Activated naive CD8-positive, alpha-beta T cell treated with anti-CD3 and anti-CD28 coated beads, Interleukin-2, amount 10 ng/mL, durations not matched to agents 7 days and 5 days (primary cell): ENCODE measurements at regions of chr5 and their contacts with region 1.

Region 1: DNA sequence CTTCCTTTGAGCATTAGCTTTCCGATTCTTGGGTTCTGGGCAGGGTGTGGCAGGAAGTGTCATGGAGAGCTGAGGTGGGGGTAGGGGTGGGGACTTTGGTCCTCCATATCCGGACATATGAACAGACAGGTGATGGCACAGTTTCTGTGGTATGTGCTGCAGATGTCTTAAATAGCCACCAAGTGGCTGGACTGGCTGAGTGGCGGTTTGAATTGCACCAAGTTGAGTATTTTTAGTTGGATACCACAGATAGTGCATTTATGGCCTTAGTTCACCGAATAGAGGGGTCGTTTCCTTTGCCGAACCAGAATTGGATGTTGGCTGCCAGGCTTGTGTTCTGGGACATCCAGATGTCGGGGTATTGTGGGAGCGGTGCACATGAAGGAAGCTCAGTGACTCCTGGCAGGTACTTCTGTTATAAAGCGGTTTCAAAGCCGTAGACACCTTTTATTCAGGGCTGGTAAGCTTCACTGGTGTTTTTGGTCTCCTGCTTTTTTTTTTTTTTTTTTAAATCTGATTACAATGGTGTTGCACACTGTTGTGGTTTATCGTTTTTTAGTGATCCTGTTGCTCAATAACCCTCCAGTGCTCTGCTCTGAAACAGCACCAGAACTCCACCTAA is 15.1 kb upstream of the TNFAIP8 start:
- DNase-seq: peak; percentile 63
- ATAC-seq: peak; percentile 68
- H3K4me3 Mint-ChIP-seq: peak overlapping the region; percentile 83
- H3K27ac Mint-ChIP-seq: peak overlapping the region; percentile 96
- H3K4me1 Mint-ChIP-seq: peaks cover 86% of the 10 kb centered on the region
- H3K27me3 Mint-ChIP-seq: no peaks in the 10 kb centered on the region

Region 2: DNA sequence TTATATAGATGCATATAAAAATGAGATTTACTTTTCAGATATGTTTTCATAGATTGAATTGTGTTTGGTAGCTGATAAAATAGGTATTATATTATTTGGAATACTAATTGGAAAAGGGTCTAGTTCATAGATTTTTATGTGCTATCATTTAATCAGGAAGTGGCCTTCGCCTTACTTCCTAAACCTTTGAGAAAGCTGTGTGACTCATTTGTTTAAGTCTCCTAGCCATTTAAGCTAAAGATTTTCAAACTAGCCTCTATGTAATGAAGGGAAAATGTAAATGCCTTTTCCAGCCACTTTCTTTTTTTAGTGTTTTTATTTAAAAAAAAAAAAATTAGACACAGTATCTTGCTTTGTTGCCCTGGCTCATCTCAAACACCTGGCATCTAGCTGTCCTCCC is 172.3 kb before region 1 on chr5:
- POLR2A ChIA-PET with region 1: no interaction called
- DNase-seq: no peak
- ATAC-seq: no peak
- H3K4me3 Mint-ChIP-seq: no peak overlapping the region
- H3K27ac Mint-ChIP-seq: no peak overlapping the region
- H3K4me1 Mint-ChIP-seq: peaks cover 1% of the 10 kb centered on the region
- H3K27me3 Mint-ChIP-seq: no peaks in the 10 kb centered on the region

Region 3: GRCh38 chr5:119267958-119268386 is 72.7 kb before region 1 on chr5:
- POLR2A ChIA-PET with region 1: interaction called, 127 read pairs
- DNase-seq: peak; percentile 72
- ATAC-seq: peak; percentile 48
- H3K4me3 Mint-ChIP-seq: peak overlapping the region; percentile 100
- H3K27ac Mint-ChIP-seq: peak overlapping the region; percentile 98
- H3K4me1 Mint-ChIP-seq: peaks cover 35% of the 10 kb centered on the region
- H3K27me3 Mint-ChIP-seq: no peaks in the 10 kb centered on the region

Region 4: GRCh38 chr5:119315516-119315949 is 25.2 kb before region 1 on chr5:
- POLR2A ChIA-PET with region 1: interaction called, 23 read pairs
- DNase-seq: no peak
- ATAC-seq: peak; percentile 78
- H3K4me3 Mint-ChIP-seq: peak overlapping the region; percentile 64
- H3K27ac Mint-ChIP-seq: peak overlapping the region; percentile 88
- H3K4me1 Mint-ChIP-seq: peaks cover 79% of the 10 kb centered on the region
- H3K27me3 Mint-ChIP-seq: no peaks in the 10 kb centered on the region

Region 5: GRCh38 chr5:119322948-119323537 is 17.7 kb before region 1 on chr5:
- POLR2A ChIA-PET with region 1: interaction called, 23 read pairs
- DNase-seq: no peak
- ATAC-seq: peak; percentile 40
- H3K4me3 Mint-ChIP-seq: peak overlapping the region; percentile 76
- H3K27ac Mint-ChIP-seq: peak overlapping the region; percentile 92
- H3K4me1 Mint-ChIP-seq: peaks cover 78% of the 10 kb centered on the region
- H3K27me3 Mint-ChIP-seq: no peaks in the 10 kb centered on the region

Region 6: DNA sequence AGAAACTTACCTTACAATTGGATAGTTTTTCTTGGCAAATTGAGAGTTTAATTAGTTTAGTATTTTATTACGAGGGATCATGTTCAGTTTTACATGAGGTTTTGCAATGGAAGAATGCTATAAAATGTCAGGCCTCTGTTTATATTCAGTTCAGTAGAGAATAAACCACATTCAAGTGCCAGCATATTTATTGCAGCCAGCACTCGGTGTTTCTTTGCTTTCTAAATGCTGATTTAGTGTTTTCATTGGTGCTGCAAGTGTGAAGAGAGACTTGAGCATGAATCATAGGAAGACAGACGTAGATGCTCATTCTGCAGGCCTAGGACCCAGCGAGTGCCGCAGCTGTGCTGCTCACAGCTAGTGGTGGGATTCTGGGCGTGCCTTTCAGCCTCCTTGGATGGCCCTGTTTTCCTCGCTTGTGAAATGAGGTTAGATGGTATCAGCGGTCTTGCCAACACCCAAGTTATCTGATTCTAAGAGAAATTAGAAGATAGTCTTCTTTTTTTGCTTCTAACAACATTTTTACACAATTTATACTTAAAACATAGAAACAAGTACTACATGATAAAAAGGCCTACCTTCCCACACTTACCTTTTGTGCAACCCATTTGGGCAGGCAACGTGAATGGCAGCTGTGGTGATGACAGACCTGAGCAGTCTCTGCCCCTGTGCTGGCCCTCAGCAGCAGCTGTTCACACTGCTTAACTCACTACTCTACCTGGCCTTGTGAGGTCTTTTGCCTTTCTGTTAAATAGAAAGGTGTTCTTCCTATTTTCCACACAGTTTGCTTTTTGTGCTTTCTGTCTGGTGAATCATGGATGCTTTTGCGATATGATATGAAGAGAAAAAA is 11.7 kb before region 1 on chr5:
- POLR2A ChIA-PET with region 1: interaction called, 23 read pairs
- DNase-seq: no peak
- ATAC-seq: peak; percentile 70
- H3K4me3 Mint-ChIP-seq: peak overlapping the region; percentile 66
- H3K27ac Mint-ChIP-seq: peak overlapping the region; percentile 97
- H3K4me1 Mint-ChIP-seq: peaks cover 73% of the 10 kb centered on the region
- H3K27me3 Mint-ChIP-seq: no peaks in the 10 kb centered on the region

Region 7: DNA sequence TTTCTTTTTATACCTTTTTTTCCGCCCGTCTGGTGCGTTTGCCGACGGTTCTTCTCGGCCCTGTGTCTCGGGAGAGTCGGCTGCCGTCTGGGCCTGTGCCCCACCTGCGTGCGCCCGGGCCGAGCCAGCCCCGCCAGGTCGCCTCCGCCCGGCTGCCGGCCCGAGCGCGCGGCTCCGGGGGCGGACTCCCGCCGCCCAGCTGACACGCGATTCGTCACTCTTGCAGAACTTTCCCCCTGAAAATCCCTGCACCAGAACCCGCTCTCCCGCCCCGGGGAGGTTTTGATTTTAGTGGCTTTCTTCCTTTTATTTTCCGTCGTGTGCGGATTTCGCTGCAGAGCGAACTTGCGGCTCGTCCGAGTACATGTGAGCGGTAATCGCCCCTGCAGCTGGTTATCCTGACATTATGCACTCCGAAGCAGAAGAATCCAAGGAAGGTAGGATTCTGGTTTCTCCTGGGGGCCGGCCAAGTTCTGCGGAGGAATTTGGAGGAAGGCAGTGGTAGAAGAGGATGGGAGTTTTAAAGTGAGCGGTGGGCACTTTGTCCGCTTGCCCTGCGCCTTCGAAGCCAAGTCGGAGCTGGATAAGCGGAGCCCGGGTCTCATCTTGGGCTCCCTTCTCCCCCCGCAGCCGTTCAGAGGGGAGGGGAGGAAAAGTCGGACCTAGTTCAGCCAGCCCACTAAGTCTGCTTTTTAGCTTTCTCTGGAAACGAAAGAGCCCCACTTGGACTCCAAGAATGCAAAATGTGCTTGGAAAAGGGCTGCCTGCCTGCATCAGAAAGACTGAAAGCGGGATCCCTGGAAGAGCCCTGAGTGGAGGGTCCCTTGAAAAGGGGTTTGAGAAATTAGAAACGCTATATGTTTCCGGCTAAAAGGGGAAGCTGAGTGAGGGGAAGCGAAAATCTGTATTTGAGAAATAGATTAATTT is 15.2 kb after region 1 on chr5 and contains the start of gene TNFAIP8:
- POLR2A ChIA-PET with region 1: interaction called, 32 read pairs
- DNase-seq: peak; percentile 58
- ATAC-seq: peak; percentile 48
- H3K4me3 Mint-ChIP-seq: peak within 1 kb of the TSS; percentile 90
- H3K27ac Mint-ChIP-seq: peak within 1 kb of the TSS; percentile 81
- H3K4me1 Mint-ChIP-seq: peaks cover 80% of the 10 kb centered on the region
- H3K27me3 Mint-ChIP-seq: no peaks in the 10 kb centered on the region
- total RNA-seq, gene TNFAIP8: 121 to 122 TPM

Region 8: DNA sequence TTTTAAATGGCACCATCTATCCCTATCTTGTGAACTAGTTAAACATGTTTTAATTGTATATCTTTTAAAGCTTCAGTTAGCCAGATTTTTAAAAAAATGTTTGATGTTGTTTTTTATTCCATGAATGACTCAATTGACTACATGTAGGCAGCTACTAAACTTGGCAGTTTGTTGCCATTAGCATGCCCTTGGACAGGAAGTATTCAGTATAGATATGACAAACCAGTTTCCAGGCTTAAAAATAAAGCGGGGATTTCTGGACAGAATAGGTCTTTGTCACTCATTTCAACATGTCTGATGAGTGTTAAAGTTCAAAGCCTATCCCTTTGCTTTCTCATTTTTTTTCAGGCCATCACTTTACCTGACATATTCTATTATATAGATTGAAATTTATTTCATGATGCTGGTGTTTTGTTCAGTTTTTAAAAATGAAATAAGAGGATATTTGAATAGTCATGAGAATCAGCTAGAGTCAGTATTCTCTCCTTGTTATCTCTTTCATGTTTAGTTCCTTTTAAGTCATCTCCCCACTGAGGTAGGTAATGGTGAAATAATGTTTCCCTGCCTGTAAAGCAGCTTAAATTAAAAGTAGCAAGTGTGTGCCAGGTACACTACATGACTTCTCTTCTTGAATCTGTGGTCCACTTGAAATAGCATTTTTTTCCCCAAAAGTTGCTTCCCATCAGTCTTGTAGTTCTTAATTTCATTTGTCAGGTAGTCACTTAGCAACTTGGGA is 27.0 kb after region 1 on chr5:
- POLR2A ChIA-PET with region 1: interaction called, 20 read pairs
- DNase-seq: no peak
- ATAC-seq: peak; percentile 62
- H3K4me3 Mint-ChIP-seq: peak overlapping the region; percentile 72
- H3K27ac Mint-ChIP-seq: peak overlapping the region; percentile 91
- H3K4me1 Mint-ChIP-seq: peaks cover 65% of the 10 kb centered on the region
- H3K27me3 Mint-ChIP-seq: no peaks in the 10 kb centered on the region